Ovary (tissue), 10 donors: ENCODE measurements at regions of chr11 and their contacts with region 1.

Region 1: GRCh38 chr11:65314501-65315203 is at the start of gene CDC42EP2:
- DNase-seq: peak; percentile 87 to 94 (median 90)
- H3K4me3 ChIP-seq: peak within 1 kb of the TSS; percentile 96
- H3K27ac ChIP-seq: peak within 1 kb of the TSS; percentile 25 to 84
- H3K4me1 ChIP-seq: peaks cover 15% of the 10 kb centered on the region
- H3K27me3 ChIP-seq: no peaks in the 10 kb centered on the region
- CTCF ChIP-seq: peak in 2 of 3 donors; percentile 26 to 36
- EP300 ChIP-seq: no peak
- POLR2A ChIP-seq: peak; percentile 82
- total RNA-seq, gene CDC42EP2: 13.7 to 46.9 (median 20.1) TPM

Region 2: GRCh38 chr11:65293909-65294381 is 20.7 kb before region 1 on chr11:
- intact Hi-C with region 1: loop called in 1 of 4 experiments (anchors 2 kb)
- DNase-seq: peak in 4 of 5 donors; percentile 64 to 76 (median 75)
- H3K4me3 ChIP-seq: no peak overlapping the region
- H3K27ac ChIP-seq: peak overlapping the region; percentile 7 to 94
- H3K4me1 ChIP-seq: peaks cover 51% of the 10 kb centered on the region
- H3K27me3 ChIP-seq: no peaks in the 10 kb centered on the region
- CTCF ChIP-seq: no peak
- EP300 ChIP-seq: no peak
- POLR2A ChIP-seq: no peak